Transverse colon (tissue), 4 donors: ENCODE measurements at regions of chr1 and their contacts with region 1.

Region 1: GRCh38 chr1:66996018-66996682 is 57.8 kb downstream of the SLC35D1 start:
- DNase-seq: peak; percentile 58
- H3K4me3 ChIP-seq: no peak overlapping the region
- H3K27ac ChIP-seq: no peak overlapping the region
- H3K4me1 ChIP-seq: no peaks in the 10 kb centered on the region
- H3K27me3 ChIP-seq: no peaks in the 10 kb centered on the region
- CTCF ChIP-seq: peak; percentile 63 to 83 (median 69)
- EP300 ChIP-seq: no peak
- POLR2A ChIP-seq: no peak

Region 2: DNA sequence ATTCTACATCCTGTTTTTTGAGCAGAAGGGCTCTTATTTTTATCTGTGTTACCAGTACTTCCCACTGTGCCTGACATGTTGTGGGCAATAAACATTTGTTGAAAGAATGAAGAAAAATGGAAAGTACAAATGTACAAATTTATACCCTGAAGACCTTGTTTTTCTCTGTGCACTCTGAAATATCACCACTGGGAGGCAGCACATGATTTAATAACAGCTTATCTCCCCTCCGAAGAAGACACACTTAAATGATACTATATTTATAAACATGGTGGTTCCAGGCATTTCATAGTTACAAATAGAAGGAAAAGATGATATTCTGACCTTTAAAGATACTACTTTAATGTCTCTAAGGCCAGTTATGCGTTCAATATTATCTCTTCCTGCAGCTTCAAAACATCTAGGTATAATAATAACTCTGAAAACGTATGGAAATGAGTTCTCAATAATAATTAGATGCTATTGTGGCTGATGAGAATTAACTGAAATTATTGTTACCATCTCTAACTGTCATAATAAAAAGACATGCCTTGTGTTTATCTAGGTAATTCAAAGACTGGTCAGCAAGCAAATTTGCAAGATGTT is 231.1 kb before region 1 on chr1:
- in situ Hi-C with region 1: loop called in 2 of 4 experiments (anchors 25 kb)
- intact Hi-C with region 1: no loop called
- DNase-seq: peak; percentile 30
- H3K4me3 ChIP-seq: no peak overlapping the region
- H3K27ac ChIP-seq: no peak overlapping the region
- H3K4me1 ChIP-seq: no peaks in the 10 kb centered on the region
- H3K27me3 ChIP-seq: no peaks in the 10 kb centered on the region
- CTCF ChIP-seq: peak; percentile 64 to 77 (median 71)
- EP300 ChIP-seq: no peak
- POLR2A ChIP-seq: no peak

Region 3: DNA sequence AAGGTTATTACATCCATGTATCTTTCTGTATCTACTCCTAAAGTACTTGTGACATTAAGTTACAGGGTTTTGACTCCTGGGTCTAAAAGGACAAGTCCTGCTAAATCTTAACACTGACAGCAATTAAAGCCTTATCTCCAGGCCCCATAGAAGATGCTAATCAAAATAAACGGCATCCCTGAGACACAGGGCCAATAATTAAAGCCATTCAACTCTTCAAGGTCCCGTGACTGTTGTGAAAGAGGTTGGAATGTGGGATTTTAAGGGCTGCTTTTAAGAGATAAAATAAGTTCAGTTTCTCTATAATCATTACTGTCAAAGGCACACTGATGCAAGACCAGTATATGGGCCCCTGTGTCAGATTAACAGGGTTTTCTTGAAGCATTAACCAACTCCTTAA is 79.8 kb before region 1 on chr1:
- in situ Hi-C with region 1: no loop called
- intact Hi-C with region 1: no loop called
- DNase-seq: no peak
- H3K4me3 ChIP-seq: no peak overlapping the region
- H3K27ac ChIP-seq: no peak overlapping the region
- H3K4me1 ChIP-seq: peaks cover 0 to 43% (median 24%) of the 10 kb centered on the region in 4 donors
- H3K27me3 ChIP-seq: no peaks in the 10 kb centered on the region
- CTCF ChIP-seq: no peak
- EP300 ChIP-seq: no peak
- POLR2A ChIP-seq: no peak

Region 4: DNA sequence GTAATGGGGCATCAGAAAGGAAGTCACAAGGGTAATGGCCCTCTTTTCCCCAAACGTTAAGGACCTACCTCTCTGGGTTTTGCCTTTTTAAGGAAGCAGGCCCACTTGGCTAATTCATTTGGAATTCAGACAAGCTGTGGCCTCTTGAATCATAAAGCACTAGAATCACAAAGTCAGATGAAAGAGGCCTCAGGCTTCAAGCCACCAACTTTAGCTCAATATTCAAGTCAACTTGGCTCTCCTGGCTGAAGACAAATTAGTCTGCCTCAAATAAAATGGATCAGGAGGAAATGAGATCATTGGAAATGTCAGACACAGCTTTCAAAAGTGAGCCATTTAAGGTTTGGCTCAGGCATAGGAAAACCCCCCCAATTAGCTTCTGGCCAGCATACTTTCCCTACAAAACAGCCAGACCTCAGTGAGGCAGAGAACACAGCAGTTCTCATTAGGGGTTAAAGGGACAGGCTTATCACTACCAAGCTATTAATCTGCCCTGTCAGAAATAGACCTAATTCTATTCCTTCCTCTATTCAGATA is 23.5 kb after region 1 on chr1:
- in situ Hi-C with region 1: no loop called
- intact Hi-C with region 1: no loop called
- DNase-seq: no peak
- H3K4me3 ChIP-seq: no peak overlapping the region
- H3K27ac ChIP-seq: peak overlapping the region; percentile 22 to 66 (median 46)
- H3K4me1 ChIP-seq: peaks cover 0 to 20% (median 7%) of the 10 kb centered on the region in 4 donors
- H3K27me3 ChIP-seq: no peaks in the 10 kb centered on the region
- CTCF ChIP-seq: no peak
- EP300 ChIP-seq: no peak
- POLR2A ChIP-seq: no peak

Region 5: DNA sequence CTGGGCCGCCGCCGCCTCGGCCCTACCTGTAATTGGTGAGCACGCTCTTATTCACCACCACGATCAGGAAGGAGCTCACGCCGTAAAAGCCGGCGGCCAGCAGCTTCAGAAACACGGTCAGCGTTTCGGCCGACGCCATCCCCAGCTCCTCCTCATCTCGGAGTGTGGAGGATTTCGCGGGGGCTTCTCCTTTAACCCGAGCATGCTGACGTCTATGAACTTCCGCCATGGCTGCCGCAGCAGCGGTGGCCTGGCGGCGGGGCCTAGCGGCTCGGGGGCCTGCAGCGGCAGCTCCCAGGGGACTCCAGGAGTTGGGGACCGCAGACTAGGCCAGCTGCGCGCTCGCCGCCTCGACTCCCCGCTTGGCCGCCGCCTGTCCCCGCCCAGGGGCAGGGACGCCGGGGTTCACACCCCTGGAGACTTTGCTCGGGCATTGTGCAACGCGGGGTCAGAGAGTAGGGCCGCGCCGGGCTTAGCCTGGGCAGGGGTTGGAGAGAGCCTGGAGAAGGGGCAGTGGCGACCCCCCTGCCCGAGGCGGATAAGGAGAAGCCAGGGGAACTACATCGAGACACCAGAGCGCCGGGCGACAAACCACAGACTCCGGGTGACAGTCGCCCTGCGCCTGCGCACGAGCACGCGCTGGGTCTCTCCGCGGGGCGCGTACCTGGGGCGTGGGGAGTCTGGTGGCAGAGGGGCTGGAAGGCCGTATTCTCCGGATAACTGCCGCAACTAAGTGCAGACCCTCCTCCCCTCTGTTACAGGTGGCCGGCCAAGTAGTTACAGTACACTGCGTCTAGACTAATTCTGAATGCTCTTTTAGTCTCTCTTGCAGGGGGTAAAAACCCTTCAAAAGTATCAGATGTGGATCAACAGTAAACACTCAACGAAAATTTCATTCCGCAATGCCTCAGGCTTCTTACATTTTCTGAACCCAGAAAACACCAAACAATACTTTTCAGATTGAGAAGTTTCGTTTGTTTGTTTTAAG is 57.9 kb after region 1 on chr1 and contains the start of gene SLC35D1:
- in situ Hi-C with region 1: no loop called
- intact Hi-C with region 1: loop called (anchors 5 kb)
- DNase-seq: peak; percentile 87
- H3K4me3 ChIP-seq: peak within 1 kb of the TSS; percentile 81 to 88 (median 84)
- H3K27ac ChIP-seq: peak within 1 kb of the TSS; percentile 96 to 99 (median 98)
- H3K4me1 ChIP-seq: peaks cover 0 to 39% (median 22%) of the 10 kb centered on the region in 4 donors
- H3K27me3 ChIP-seq: no peaks in the 10 kb centered on the region
- CTCF ChIP-seq: no peak
- EP300 ChIP-seq: no peak
- POLR2A ChIP-seq: peak; percentile 88
- total RNA-seq, gene SLC35D1: 10.0 to 68.6 (median 51.9) TPM